Sciatic nerve (tissue), 2 donors: ENCODE measurements at regions of chr16 and their contacts with region 1.

Region 1: DNA sequence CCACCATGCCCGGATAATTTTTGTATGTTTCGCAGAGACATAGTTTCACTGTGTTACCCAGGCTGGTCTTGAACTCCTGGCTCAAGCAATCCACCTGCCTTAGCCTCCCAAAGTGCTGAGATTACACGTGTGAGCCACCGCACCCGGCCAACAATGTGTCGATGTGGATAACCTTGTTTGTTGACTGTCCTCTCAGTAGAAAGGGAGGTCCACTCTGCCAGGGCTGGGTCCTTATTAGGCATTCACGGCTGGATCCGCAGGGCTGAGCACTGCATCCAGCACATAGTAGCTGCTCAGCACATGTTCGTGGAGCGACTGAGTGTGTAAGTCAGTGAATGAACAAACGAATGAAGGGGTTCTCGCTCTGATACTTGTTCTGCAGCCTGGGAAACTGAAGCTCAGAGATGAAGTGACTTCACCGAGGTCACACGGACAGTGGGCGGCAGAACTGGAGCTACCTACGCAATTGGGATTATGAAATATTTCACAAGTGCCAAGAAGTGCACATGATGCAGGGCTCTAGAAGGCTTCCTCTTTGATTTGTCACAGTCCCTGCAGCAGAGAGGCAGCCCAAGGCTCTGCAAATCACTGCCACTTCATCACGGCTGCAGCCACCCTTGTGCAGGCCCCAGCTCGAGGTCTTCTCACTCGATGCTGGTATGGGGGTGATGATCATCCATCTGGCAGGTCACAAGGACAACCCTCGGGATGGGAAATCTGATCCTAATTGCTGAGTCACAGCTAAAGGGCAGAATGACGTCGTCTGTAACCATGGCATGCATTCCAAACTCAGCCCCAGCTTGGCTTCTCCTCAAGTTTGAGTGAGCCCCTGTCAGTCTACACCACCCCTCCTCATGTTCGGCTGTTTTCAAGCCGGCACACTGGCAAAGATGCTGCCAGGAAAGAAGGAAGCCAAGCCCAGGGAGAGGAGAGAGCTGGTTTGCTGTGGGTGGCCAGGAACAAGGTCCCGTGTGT is 28.0 kb upstream of the SNN start:
- DNase-seq: peak; percentile 87
- ATAC-seq: peak; percentile 96

Region 2: DNA sequence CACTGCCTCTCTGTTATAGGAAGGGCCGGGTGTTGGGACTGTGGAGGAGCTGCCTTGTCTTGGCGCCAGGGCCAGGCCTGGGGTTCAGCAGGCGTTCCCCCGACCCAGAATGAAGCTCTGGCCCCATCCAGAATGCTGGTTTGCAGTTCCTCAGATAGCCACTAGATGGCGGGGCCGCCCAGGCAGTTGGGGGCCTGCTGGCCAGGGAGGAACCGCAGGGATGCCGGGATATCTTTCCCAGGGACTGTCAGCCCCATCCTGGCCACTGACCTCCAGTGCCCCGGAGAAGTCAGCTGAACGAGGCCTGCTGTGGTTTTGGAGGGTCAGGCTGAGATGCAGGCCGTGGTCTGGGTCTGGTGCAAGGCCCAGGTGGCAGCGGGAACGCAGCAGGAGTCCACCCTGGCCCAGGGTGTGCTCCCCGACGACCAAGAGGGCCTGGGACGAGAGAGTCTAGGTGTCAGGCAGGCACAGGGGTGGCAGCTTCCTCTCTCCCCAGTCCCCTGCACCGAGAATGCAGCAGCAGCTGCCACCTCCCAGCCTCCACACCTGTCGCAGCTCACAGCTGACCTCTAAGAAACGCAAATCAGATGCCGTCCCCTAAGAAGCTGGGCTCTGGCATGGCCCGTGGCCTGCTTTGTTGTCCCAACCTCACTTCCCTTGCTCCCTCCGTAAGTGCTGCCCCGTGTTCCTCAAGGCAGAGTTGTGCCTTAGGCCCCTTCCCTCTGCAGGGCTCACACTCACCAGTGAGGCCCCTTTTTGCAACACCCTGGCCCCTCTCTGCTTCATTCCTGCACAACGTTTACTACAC is 243.8 kb before region 1 on chr16:
- intact Hi-C with region 1: loop called (anchors 5 kb)
- DNase-seq: peak; percentile 90
- ATAC-seq: peak; percentile 93

Region 3: GRCh38 chr16:11459722-11460121 is 180.5 kb before region 1 on chr16:
- intact Hi-C with region 1: loop called (anchors 5 kb)
- DNase-seq: no peak
- ATAC-seq: no peak

Region 4: DNA sequence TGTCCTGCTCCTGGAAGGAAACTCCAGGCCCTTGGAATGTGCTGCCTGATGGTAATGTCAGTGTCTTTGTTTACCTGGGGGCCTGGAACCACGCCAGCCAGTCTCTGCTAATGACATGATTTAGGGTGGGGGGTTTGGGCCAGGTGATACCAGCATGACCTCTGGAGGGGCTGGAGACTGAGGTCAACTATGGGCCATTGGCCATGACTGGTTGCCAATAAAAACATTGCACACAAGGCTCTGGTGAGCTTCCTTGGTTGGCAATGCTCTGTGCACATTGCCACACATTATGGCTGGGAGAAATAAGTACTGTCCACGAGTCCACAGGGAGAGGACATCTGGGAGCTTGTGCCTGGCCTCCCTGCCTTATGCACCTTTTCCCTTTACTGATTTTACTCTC is 106.0 kb before region 1 on chr16:
- intact Hi-C with region 1: loop called (anchors 5 kb)
- DNase-seq: no peak
- ATAC-seq: peak; percentile 43